PC-3 (cell line): ENCODE measurements at regions of chr7 and their contacts with region 1.

Region 1: DNA sequence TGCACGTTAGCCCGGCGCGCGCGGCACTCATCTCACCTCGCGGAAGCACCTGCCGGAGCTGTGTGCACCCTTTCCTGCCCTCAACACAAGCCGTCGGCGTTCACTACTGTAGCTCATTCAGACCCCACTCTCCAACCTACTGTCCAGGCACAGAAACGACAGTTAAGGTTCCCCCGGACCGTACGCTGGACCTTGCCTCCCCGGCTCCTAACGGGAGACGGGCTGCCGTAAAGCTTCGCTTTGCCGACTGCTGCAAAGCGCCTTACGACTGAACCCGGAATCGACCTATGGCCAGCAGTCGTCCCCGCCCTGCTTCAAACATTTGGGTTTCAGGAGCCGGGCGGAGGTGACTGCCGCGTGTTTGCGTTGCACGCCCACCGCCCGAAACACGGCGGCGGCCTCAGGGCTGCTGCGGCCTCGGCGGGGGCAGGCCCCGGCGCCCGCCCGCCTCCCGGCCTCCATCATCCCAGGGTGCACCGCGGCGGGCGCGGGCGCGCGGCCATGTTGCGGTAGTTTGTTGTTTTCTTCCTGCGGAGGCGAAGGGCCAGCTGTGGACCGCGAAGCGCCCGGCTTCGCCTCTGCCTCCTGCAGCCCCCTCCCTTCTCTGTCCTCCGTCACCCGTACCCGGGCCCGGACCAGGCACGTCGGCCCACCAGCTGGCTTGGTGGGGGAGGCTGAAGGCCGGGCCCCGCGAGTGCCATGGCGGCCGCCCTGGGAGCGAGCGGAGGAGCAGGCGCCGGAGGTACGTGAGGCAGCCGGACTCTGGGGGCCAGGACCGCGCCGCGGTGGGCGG is at the start of gene RBM33:
- DNase-seq: peak; percentile 77
- ATAC-seq: peak; percentile 72
- H3K4me3 ChIP-seq: peak within 1 kb of the TSS; percentile 87
- H3K27ac ChIP-seq: peak within 1 kb of the TSS; percentile 75
- H3K4me1 ChIP-seq: peaks cover 12% of the 10 kb centered on the region
- H3K27me3 ChIP-seq: no peaks in the 10 kb centered on the region
- CTCF ChIP-seq: no peak
- total RNA-seq, gene RBM33: 25.3 and 31.2 TPM in 2 replicates

Region 2: DNA sequence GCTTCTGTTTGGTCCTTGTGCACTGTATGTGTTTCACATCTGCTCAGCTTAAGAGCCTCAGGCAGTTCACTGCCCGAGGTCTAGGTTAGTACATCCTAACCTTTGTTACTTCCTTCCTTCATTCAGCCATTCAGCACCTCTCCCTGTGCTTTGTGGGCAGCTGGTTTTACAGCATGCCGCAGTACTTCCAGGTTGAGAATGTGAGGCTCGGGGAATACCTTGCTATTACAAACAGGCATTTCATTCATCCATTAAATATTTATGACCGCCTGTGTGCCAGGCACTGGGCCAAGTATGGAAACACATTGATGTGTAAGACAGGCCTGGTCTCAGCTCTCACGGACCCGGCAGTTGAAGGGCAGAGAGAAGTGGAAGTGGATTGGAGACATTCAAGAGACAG is 85.5 kb after region 1 on chr7:
- CTCF ChIA-PET with region 1: no interaction called
- POLR2A ChIA-PET with region 1: no interaction called
- intact Hi-C with region 1: loop called (anchors 5 kb)
- DNase-seq: peak; percentile 60
- ATAC-seq: peak; percentile 52
- H3K4me3 ChIP-seq: no peak overlapping the region
- H3K27ac ChIP-seq: 0 out of 2 replicates have a peak overlapping the region, but pooled peaks have one; percentile 10
- H3K4me1 ChIP-seq: peaks cover 28% of the 10 kb centered on the region
- H3K27me3 ChIP-seq: no peaks in the 10 kb centered on the region
- CTCF ChIP-seq: no peak